Transverse colon (tissue), 4 donors: ENCODE measurements at regions of chr7 and their contacts with region 1.

Region 1: GRCh38 chr7:135342887-135343286 is 109.2 kb downstream of the STRA8 start:
- DNase-seq: no peak
- H3K4me3 ChIP-seq: no peak overlapping the region
- H3K27ac ChIP-seq: no peak overlapping the region
- H3K4me1 ChIP-seq: no peaks in the 10 kb centered on the region
- H3K27me3 ChIP-seq: no peaks in the 10 kb centered on the region
- CTCF ChIP-seq: no peak
- EP300 ChIP-seq: no peak
- POLR2A ChIP-seq: no peak

Region 2: DNA sequence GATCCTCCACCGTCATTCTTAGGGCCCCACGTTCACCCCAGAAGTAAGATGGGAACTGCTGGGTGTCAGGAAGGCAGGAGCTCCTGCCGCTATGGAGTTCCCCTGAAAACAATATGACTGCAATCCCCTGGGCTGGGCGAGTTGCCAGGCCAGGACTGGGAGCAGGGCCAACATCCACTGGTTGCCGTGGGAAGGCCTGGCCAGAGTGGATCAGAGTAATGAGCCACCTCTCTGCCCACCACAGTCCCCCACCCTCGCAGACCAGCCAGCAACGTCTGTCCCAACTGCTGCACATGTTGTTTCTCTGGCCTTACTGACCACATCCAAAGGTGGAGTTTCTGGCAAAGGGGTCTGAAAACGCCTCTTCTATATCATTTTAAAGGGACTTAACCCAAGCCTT is 22.6 kb before region 1 on chr7:
- in situ Hi-C with region 1: no loop called
- intact Hi-C with region 1: loop called (anchors 2 kb)
- DNase-seq: peak; percentile 69
- H3K4me3 ChIP-seq: no peak overlapping the region
- H3K27ac ChIP-seq: no peak overlapping the region
- H3K4me1 ChIP-seq: peaks cover 0 to 9% (median 6%) of the 10 kb centered on the region in 4 donors
- H3K27me3 ChIP-seq: no peaks in the 10 kb centered on the region
- CTCF ChIP-seq: no peak
- EP300 ChIP-seq: no peak
- POLR2A ChIP-seq: no peak

Region 3: GRCh38 chr7:135406918-135407317 is 64.0 kb after region 1 on chr7:
- in situ Hi-C with region 1: no loop called
- intact Hi-C with region 1: no loop called
- DNase-seq: no peak
- H3K4me3 ChIP-seq: no peak overlapping the region
- H3K27ac ChIP-seq: no peak overlapping the region
- H3K4me1 ChIP-seq: no peaks in the 10 kb centered on the region
- H3K27me3 ChIP-seq: no peaks in the 10 kb centered on the region
- CTCF ChIP-seq: no peak
- EP300 ChIP-seq: no peak
- POLR2A ChIP-seq: no peak

Region 4: GRCh38 chr7:135575296-135575695 is 232.4 kb after region 1 on chr7:
- in situ Hi-C with region 1: no loop called
- intact Hi-C with region 1: no loop called
- DNase-seq: no peak
- H3K4me3 ChIP-seq: no peak overlapping the region
- H3K27ac ChIP-seq: no peak overlapping the region
- H3K4me1 ChIP-seq: no peaks in the 10 kb centered on the region
- H3K27me3 ChIP-seq: no peaks in the 10 kb centered on the region
- CTCF ChIP-seq: no peak
- EP300 ChIP-seq: no peak
- POLR2A ChIP-seq: no peak